MCF 10A (cell line): ENCODE measurements at regions of chr3 and their contacts with region 1.

Region 1: GRCh38 chr3:133426721-133427120 is 26.9 kb downstream of the BFSP2 start:
- DNase-seq: no peak
- H3K4me3 Mint-ChIP-seq: no peak overlapping the region
- H3K27ac Mint-ChIP-seq: no peak overlapping the region
- H3K4me1 Mint-ChIP-seq: no peaks in the 10 kb centered on the region
- H3K27me3 Mint-ChIP-seq: no peaks in the 10 kb centered on the region
- CTCF ChIP-seq: no peak

Region 2: GRCh38 chr3:133412183-133413132 is 14.3 kb before region 1 on chr3:
- CTCF ChIA-PET with region 1: interaction called, 11 read pairs
- POLR2A ChIA-PET with region 1: no interaction called
- intact Hi-C with region 1: no loop called
- DNase-seq: no peak
- H3K4me3 Mint-ChIP-seq: no peak overlapping the region
- H3K27ac Mint-ChIP-seq: no peak overlapping the region
- H3K4me1 Mint-ChIP-seq: no peaks in the 10 kb centered on the region
- H3K27me3 Mint-ChIP-seq: peaks cover 54% of the 10 kb centered on the region
- CTCF ChIP-seq: no peak

Region 3: GRCh38 chr3:134308350-134308891 is 881.7 kb after region 1 on chr3:
- CTCF ChIA-PET with region 1: no interaction called
- POLR2A ChIA-PET with region 1: no interaction called
- intact Hi-C with region 1: no loop called
- DNase-seq: peak; percentile 83
- H3K4me3 Mint-ChIP-seq: no peak overlapping the region
- H3K27ac Mint-ChIP-seq: peak overlapping the region; percentile 57
- H3K4me1 Mint-ChIP-seq: peaks cover 32% of the 10 kb centered on the region
- H3K27me3 Mint-ChIP-seq: no peaks in the 10 kb centered on the region
- CTCF ChIP-seq: peak; percentile 97